OCI-LY7 (cell line): ENCODE measurements at regions of chr1 and their contacts with region 1.

Region 1: DNA sequence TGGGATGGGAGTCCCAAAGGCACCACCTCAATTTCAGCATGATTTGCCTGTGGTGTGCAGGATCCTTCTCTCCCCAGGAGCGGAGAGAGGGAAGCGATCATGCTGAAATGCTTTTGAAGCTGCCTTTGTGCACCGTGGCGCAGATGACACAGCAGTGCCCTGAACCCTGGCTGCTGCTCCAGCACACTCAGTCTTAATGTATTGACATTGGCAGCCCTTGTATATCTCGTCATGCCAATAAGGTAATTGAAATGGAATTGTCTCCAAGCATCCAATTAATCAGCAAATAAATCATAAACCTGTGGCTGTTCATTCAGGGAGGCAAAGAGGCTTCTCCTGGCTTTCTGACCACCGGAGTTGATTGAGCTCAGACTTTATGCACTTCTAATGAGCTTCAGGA is 139.7 kb downstream of the KAZN start:
- DNase-seq: peak; percentile 26
- H3K4me3 ChIP-seq: peak overlapping the region; percentile 5
- H3K27ac ChIP-seq: peak overlapping the region; percentile 98
- H3K4me1 ChIP-seq: peaks cover 68% of the 10 kb centered on the region
- CTCF ChIP-seq: no peak

Region 2: DNA sequence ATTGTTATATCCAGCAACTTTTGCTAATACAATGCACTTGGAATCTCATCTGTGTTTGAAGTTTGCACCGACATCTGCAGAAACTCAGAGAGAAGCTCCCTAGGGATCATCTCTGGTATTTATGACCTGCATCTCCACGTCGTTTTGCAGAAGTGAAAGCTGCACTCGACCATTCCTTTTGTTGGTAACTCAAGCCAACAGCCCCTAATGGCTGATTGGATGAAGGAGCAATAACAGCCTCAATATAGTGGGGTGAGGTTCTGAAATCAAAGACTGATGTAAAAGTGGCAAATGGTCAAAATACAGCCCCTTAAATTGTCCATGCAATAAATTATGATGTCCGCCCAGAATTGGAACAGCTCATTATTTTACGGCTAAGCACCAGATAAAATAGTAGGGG is 484.0 kb before region 1 on chr1:
- CTCF ChIA-PET with region 1: no interaction called
- POLR2A ChIA-PET with region 1: no interaction called
- intact Hi-C with region 1: loop called (anchors 5 kb)
- DNase-seq: peak; percentile 99
- H3K4me3 ChIP-seq: peak overlapping the region; percentile 48
- H3K27ac ChIP-seq: peak overlapping the region; percentile 95
- H3K4me1 ChIP-seq: peaks cover 81% of the 10 kb centered on the region
- CTCF ChIP-seq: no peak

Region 3: DNA sequence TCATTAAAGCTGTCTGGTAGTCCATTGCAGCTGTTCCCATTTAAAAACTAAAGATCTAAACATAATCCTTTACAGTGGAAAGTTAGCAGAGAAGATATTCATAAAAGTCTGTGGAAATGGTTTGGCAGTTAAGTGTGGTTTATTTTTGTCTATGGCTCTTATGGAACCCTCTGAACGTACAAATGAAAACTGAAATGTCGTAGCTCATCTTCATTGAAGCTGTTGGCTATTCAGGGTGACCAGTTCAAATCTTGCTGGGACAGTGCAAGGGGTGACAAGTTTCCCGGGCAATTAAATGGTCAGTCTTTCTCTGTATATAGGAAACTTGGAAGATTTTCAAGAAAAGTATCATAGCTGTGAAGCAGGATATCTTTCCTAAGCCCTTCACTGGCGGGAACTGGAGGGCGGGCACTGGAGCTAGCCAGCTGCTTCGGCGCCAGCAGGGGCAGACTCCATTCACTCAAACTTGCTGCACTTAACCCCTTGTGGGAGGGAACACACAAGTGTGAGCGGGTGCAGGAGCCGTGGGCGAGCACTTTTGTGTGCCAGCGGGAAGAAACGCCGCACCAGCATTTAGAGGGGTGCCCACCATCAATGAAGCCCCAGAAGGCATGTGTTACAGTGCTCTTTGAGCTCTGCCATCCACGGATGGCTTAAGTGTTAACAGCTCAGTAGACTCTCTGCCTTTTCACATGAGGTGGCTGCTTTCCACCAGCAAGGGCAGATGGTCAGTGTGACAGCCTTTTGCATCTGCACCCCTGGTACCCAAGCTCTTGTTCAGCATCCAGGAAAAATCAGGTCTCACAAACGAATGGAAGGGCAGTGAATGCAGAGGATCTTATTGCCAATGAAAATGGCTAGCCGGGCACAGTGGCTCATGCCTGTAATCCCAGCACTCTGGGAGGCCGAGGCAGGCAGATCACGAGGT is 371.9 kb before region 1 on chr1:
- CTCF ChIA-PET with region 1: no interaction called
- POLR2A ChIA-PET with region 1: no interaction called
- intact Hi-C with region 1: loop called (anchors 5 kb)
- DNase-seq: no peak
- H3K4me3 ChIP-seq: no peak overlapping the region
- H3K27ac ChIP-seq: peak overlapping the region; percentile 50
- H3K4me1 ChIP-seq: peaks cover 83% of the 10 kb centered on the region
- CTCF ChIP-seq: peak; percentile 37; the same call in 1 of the 2 replicates

Region 4: DNA sequence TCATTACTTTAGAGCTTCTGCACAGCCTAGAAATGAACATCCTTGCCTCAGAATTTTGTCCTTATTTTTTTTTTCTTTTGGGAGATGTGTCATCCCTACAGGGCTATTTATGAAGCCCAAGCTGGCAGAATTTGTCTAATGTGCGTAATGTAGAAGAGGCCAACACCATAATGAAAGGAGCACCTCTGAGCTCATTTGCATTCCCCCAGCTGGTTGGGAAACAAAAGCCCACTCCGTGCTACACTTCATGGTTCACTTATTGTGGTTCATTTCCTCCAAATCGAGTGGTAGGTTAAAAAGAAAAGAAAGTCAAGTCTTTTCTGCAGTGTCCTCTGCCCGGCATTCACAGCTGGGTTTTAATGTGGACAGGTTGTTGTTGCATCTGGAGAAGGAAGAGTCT is 66.2 kb before region 1 on chr1:
- CTCF ChIA-PET with region 1: no interaction called
- POLR2A ChIA-PET with region 1: interaction called, 9 read pairs
- intact Hi-C with region 1: loop called (anchors 1 kb)
- DNase-seq: peak; percentile 93
- H3K4me3 ChIP-seq: peak overlapping the region; percentile 57
- H3K27ac ChIP-seq: peak overlapping the region; percentile 96
- H3K4me1 ChIP-seq: peaks cover 89% of the 10 kb centered on the region
- CTCF ChIP-seq: no peak